GM12878 (cell line): ENCODE measurements at regions of chr2 and their contacts with region 1.

Region 1: DNA sequence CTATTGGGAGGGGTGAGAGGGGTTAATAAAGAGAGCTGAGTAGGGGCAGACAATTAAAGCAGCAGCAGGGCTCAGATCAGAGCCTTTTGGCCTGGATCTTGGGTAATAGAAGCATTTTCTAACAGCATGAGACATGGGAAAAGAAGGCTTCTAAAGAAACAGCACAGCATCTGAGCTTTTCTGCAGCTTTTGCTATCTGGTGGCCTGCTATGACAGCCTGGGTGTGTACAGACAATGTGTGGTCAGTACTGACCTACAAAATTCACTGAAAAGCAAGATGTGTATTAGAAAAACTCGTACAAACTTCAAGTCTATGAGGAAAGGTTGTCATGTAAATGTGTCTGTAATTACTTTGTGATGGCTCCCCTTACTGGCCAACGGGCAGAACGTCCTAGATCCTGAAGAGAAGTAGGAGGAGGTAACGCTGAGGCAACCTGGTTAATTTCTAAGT is 95.6 kb downstream of the GALNT3 start:
- DNase-seq: peak; percentile 27
- ATAC-seq: peak; percentile 95
- H3K4me3 ChIP-seq: no peak overlapping the region
- H3K27ac ChIP-seq: no peak overlapping the region
- H3K4me1 ChIP-seq: no peaks in the 10 kb centered on the region
- H3K27me3 ChIP-seq: no peaks in the 10 kb centered on the region
- CTCF ChIP-seq: peak; percentile 39 to 69 (median 64); a peak in 5 of 6 replicates
- EP300 ChIP-seq: no peak
- POLR2A ChIP-seq: no peak
- RAD21 ChIP-seq: peak; percentile 53

Region 2: GRCh38 chr2:165417009-165417408 is 281.5 kb before region 1 on chr2:
- CTCF ChIA-PET with region 1: interaction called, 4 read pairs
- POLR2A ChIA-PET with region 1: no interaction called
- RAD21 ChIA-PET with region 1: no interaction called
- SMC1A ChIA-PET with region 1: no interaction called
- in situ Hi-C with region 1: loop called (anchors 10 kb)
- intact Hi-C with region 1: no loop called
- DNase-seq: no peak
- ATAC-seq: peak; percentile 28; the same call in 2 of the 3 replicates
- H3K4me3 ChIP-seq: no peak overlapping the region
- H3K27ac ChIP-seq: no peak overlapping the region
- H3K4me1 ChIP-seq: no peaks in the 10 kb centered on the region
- H3K27me3 ChIP-seq: no peaks in the 10 kb centered on the region
- CTCF ChIP-seq: no peak
- EP300 ChIP-seq: no peak
- POLR2A ChIP-seq: no peak
- RAD21 ChIP-seq: no peak

Region 3: GRCh38 chr2:165456027-165456426 is 242.4 kb before region 1 on chr2:
- CTCF ChIA-PET with region 1: interaction called, 56 read pairs
- POLR2A ChIA-PET with region 1: no interaction called
- RAD21 ChIA-PET with region 1: interaction called, 20 read pairs
- SMC1A ChIA-PET with region 1: interaction called, 45 read pairs
- in situ Hi-C with region 1: no loop called
- intact Hi-C with region 1: no loop called
- DNase-seq: no peak
- ATAC-seq: no peak
- H3K4me3 ChIP-seq: no peak overlapping the region
- H3K27ac ChIP-seq: no peak overlapping the region
- H3K4me1 ChIP-seq: no peaks in the 10 kb centered on the region
- H3K27me3 ChIP-seq: no peaks in the 10 kb centered on the region
- CTCF ChIP-seq: no peak
- EP300 ChIP-seq: no peak
- POLR2A ChIP-seq: no peak
- RAD21 ChIP-seq: no peak

Region 4: DNA sequence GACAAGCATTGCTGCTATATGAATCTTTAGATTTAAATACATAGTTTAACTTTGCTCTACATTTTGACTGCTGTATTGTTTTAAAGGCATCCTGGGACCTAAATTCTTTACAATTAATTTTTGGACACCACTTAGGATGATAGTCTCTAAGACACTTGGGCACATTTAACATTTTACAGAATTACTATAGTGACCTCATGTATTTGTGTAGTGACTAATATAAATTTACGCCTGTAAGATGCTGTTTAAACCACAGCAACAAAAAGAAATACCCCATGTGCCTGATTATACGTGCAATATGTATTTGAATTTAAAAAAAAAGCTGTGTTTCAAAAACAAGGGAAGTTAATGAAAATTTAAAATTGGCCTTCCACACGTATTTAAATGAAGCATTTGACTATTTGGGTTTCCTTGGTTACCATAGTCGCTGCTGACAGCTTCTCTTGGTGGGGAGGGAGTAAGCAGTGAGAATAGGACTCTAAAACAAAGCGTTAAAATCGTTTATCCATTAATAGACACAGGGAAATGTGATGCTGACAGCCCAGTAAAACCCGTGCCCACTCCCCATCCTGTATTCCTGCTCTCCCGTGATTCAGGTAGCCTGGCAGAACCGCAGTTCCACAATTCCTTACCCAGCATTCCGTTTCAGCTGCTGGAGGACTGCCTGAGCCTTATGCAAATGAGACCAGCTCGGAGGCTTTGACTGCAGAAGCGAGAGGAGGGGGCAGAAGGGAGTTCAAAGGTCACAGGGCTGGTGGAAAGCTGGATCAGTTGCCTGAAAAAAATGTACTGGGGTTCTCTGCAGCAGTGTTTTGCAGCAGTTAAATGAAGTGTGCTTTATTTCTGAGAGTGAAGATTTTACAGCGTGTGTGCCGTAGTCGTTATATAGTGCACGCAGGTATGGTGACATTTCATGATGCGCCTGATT is 124.7 kb before region 1 on chr2:
- CTCF ChIA-PET with region 1: interaction called, 7 read pairs
- POLR2A ChIA-PET with region 1: no interaction called
- RAD21 ChIA-PET with region 1: interaction called, 4 read pairs
- SMC1A ChIA-PET with region 1: interaction called, 18 read pairs
- in situ Hi-C with region 1: no loop called
- intact Hi-C with region 1: no loop called
- DNase-seq: no peak
- ATAC-seq: peak; percentile 66
- H3K4me3 ChIP-seq: no peak overlapping the region
- H3K27ac ChIP-seq: no peak overlapping the region
- H3K4me1 ChIP-seq: no peaks in the 10 kb centered on the region
- H3K27me3 ChIP-seq: no peaks in the 10 kb centered on the region
- CTCF ChIP-seq: no peak
- EP300 ChIP-seq: no peak
- POLR2A ChIP-seq: no peak
- RAD21 ChIP-seq: no peak

Region 5: DNA sequence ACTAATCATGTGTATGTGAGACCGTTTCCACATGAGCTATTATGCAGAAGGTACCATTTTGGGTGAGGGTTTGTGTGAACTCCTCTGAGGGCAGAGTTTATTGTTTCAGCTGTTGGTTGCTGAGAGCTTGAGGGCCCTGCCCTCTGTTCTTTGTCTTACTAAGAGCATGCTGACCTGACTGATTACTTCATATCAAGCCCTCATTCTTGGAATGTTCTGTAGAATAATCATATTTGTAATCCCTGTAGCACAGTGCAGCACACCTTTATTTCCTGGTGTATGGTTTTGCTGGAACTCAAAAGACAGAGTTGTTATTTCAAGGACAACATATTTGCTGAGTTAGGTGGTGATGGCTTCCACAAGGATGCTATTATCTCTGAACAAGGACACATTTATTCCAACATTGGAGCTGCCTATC is 22.9 kb before region 1 on chr2:
- CTCF ChIA-PET with region 1: interaction called, 6 read pairs
- POLR2A ChIA-PET with region 1: interaction called, 4 read pairs
- RAD21 ChIA-PET with region 1: interaction called, 6 read pairs
- SMC1A ChIA-PET with region 1: interaction called, 31 read pairs
- in situ Hi-C with region 1: no loop called
- intact Hi-C with region 1: no loop called
- DNase-seq: no peak
- ATAC-seq: peak; percentile 84
- H3K4me3 ChIP-seq: no peak overlapping the region
- H3K27ac ChIP-seq: no peak overlapping the region
- H3K4me1 ChIP-seq: no peaks in the 10 kb centered on the region
- H3K27me3 ChIP-seq: no peaks in the 10 kb centered on the region
- CTCF ChIP-seq: no peak
- EP300 ChIP-seq: no peak
- POLR2A ChIP-seq: no peak
- RAD21 ChIP-seq: no peak

Region 6: GRCh38 chr2:165778653-165779451 is 80.4 kb after region 1 on chr2:
- CTCF ChIA-PET with region 1: interaction called, 6 read pairs
- POLR2A ChIA-PET with region 1: no interaction called
- RAD21 ChIA-PET with region 1: no interaction called
- SMC1A ChIA-PET with region 1: interaction called, 3 read pairs
- in situ Hi-C with region 1: no loop called
- intact Hi-C with region 1: loop called (anchors 5 kb)
- DNase-seq: no peak
- ATAC-seq: peak; percentile 93
- H3K4me3 ChIP-seq: no peak overlapping the region
- H3K27ac ChIP-seq: no peak overlapping the region
- H3K4me1 ChIP-seq: no peaks in the 10 kb centered on the region
- H3K27me3 ChIP-seq: no peaks in the 10 kb centered on the region
- CTCF ChIP-seq: peak; percentile 43 to 50 (median 46); a peak in 5 of 6 replicates
- EP300 ChIP-seq: no peak
- POLR2A ChIP-seq: no peak
- RAD21 ChIP-seq: peak; percentile 50